CD4-positive, alpha-beta memory T cell (primary cell): ENCODE measurements at regions of chr11 and their contacts with region 1.

Region 1: GRCh38 chr11:72814286-72815109 is at the start of gene ATG16L2:
- DNase-seq: peak; percentile 88 to 97 (median 92)
- H3K4me3 ChIP-seq: peak within 1 kb of the TSS; percentile 77 to 99
- H3K4me3 Mint-ChIP-seq: peak within 1 kb of the TSS; percentile 98 to 100 (median 98)
- H3K27ac ChIP-seq: peak within 1 kb of the TSS; percentile 97
- H3K27ac Mint-ChIP-seq: peak within 1 kb of the TSS; percentile 98 to 100 (median 99)
- H3K4me1 ChIP-seq: peaks cover 31% of the 10 kb centered on the region
- H3K4me1 Mint-ChIP-seq: peaks cover 31 to 67% (median 49%) of the 10 kb centered on the region in 4 donors
- H3K27me3 ChIP-seq: no peaks in the 10 kb centered on the region
- H3K27me3 Mint-ChIP-seq: no peaks in the 10 kb centered on the region
- total RNA-seq, gene ATG16L2: 194 to 202 TPM

Region 2: DNA sequence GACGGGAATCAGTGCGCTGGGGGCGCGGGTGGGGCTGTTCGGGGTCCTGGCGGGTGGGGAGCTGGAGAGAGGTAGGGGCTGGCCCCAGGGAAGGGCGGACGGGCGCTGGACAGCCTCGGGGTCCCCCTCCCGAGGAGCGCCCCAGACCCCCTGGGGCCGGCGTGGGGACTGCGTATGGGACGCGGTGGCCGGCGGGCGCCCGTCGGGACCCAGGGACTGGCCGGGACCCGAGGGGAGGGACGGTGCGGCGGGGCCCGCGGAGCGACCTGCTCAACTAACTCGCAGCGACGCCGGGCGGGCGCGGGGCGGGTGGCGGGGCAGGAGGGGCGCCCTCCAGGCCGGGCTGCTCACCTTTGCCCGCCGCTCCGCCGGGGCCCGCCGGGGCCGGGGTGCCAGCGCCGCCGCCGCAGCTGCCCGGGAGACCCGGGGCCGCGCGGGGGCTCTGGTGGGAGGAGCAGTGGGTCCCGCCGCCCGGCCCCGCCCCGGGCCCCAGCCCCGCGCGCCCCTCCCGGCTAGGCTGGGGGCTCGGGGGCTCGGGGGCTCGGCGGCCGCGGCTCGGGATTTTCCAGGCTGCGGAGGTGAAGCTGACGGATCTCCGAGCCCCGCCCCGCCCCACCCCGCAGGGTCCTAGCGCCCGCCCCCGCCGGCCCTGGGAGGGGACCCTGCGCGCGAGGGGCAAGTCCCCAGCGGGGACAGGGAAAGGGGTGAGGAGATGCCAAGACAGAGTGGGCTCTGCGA is 33.0 kb before region 1 on chr11:
- CTCF ChIA-PET with region 1: interaction called, 7 read pairs
- POLR2A ChIA-PET with region 1: interaction called, 10 read pairs
- intact Hi-C with region 1: no loop called
- DNase-seq: peak; percentile 52 to 75 (median 57)
- H3K4me3 ChIP-seq: peak overlapping the region; percentile 35 to 52
- H3K4me3 Mint-ChIP-seq: peak overlapping the region; percentile 79 to 86 (median 84)
- H3K27ac ChIP-seq: peak overlapping the region; percentile 43
- H3K27ac Mint-ChIP-seq: peak overlapping the region; percentile 55 to 93 (median 76)
- H3K4me1 ChIP-seq: peaks cover 31% of the 10 kb centered on the region
- H3K4me1 Mint-ChIP-seq: peaks cover 11 to 55% (median 24%) of the 10 kb centered on the region in 4 donors
- H3K27me3 ChIP-seq: no peaks in the 10 kb centered on the region
- H3K27me3 Mint-ChIP-seq: no peaks in the 10 kb centered on the region

Region 3: DNA sequence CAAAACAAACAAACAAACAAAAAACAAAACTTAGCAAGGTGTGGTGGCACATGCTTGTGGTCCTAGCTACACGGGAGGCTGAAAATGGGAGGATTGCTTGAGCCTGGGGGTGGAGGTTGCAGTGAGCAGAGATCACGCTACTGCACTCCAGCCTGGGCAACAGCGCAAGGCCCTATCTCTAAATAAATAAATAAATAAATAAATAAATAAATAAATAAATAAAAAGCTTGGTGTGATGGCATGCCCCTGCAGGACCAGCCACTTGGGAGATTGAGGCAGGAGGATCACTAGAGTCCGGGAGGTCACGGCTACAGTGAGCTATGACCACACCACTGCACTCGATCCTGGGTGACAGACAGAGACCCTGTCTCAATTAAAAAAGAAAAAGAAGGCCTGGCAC is 11.7 kb before region 1 on chr11:
- CTCF ChIA-PET with region 1: interaction called, 13 read pairs
- POLR2A ChIA-PET with region 1: interaction called, 10 read pairs
- intact Hi-C with region 1: no loop called
- DNase-seq: no peak
- H3K4me3 ChIP-seq: no peak overlapping the region
- H3K4me3 Mint-ChIP-seq: no peak overlapping the region
- H3K27ac ChIP-seq: no peak overlapping the region
- H3K27ac Mint-ChIP-seq: no peak overlapping the region
- H3K4me1 ChIP-seq: no peaks in the 10 kb centered on the region
- H3K4me1 Mint-ChIP-seq: peaks cover 0 to 2% (median 0%) of the 10 kb centered on the region in 4 donors
- H3K27me3 ChIP-seq: no peaks in the 10 kb centered on the region
- H3K27me3 Mint-ChIP-seq: no peaks in the 10 kb centered on the region

Region 4: GRCh38 chr11:72831513-72832300 is 17.2 kb after region 1 on chr11:
- CTCF ChIA-PET with region 1: interaction called, 6 read pairs
- POLR2A ChIA-PET with region 1: interaction called, 24 read pairs
- intact Hi-C with region 1: no loop called
- DNase-seq: peak; percentile 40 to 55 (median 44)
- H3K4me3 ChIP-seq: no peak overlapping the region
- H3K4me3 Mint-ChIP-seq: no peak overlapping the region
- H3K27ac ChIP-seq: no peak overlapping the region
- H3K27ac Mint-ChIP-seq: peak overlapping the region; percentile 3 to 79 (median 57)
- H3K4me1 ChIP-seq: no peaks in the 10 kb centered on the region
- H3K4me1 Mint-ChIP-seq: peaks cover 0 to 16% (median 6%) of the 10 kb centered on the region in 4 donors
- H3K27me3 ChIP-seq: no peaks in the 10 kb centered on the region
- H3K27me3 Mint-ChIP-seq: no peaks in the 10 kb centered on the region

Region 5: DNA sequence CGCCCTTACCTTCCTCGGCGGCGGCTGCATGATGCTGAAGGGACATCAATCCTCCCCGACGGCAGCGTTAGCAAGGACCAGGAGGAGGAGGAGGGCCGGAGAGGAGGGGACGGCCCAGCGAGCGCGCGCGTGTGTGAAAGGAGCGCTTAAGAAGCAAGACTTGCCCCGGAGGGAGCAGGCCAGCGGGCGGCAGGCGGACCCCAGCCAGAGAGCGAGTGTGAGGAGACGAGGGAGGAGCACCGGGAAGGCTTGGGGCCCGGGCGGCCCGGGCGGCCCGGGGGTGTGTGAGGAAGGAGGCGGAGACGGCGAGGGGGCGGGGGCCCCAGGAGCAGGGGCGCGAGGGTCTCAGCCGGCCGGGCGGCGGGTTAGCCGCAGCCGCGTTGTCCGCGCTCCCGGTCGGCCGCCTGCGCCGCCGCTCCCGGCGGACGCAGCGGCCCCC is 327.4 kb after region 1 on chr11:
- CTCF ChIA-PET with region 1: interaction called, 5 read pairs
- POLR2A ChIA-PET with region 1: interaction called, 14 read pairs
- intact Hi-C with region 1: loop called (anchors 1 kb)
- DNase-seq: peak in 1 of 5 donors; percentile 78
- H3K4me3 ChIP-seq: peak overlapping the region; percentile 80 to 94
- H3K4me3 Mint-ChIP-seq: peak overlapping the region; percentile 92 to 98 (median 96)
- H3K27ac ChIP-seq: peak overlapping the region; percentile 97
- H3K27ac Mint-ChIP-seq: peak overlapping the region; percentile 84 to 98 (median 95)
- H3K4me1 ChIP-seq: peaks cover 49% of the 10 kb centered on the region
- H3K4me1 Mint-ChIP-seq: peaks cover 30 to 55% (median 39%) of the 10 kb centered on the region in 4 donors
- H3K27me3 ChIP-seq: no peaks in the 10 kb centered on the region
- H3K27me3 Mint-ChIP-seq: no peaks in the 10 kb centered on the region